ENCODE measurements at regions of chr14 and their contacts with region 1.

Region 1: GRCh38 chr14:76958980-76959710 is 69.4 kb downstream of the IRF2BPL start:
- DNase-seq: peak; percentile 46
- H3K4me3 ChIP-seq: no peak overlapping the region
- H3K27ac ChIP-seq: peak overlapping the region; percentile 34 to 57
- H3K4me1 ChIP-seq: peaks cover 19% of the 10 kb centered on the region
- H3K27me3 ChIP-seq: no peaks in the 10 kb centered on the region
- CTCF ChIP-seq: no peak
- POLR2A ChIP-seq: peak; percentile 16

Region 2: GRCh38 chr14:76664790-76665189 is 294.4 kb before region 1 on chr14:
- intact Hi-C with region 1: no loop called
- DNase-seq: no peak
- H3K4me3 ChIP-seq: no peak overlapping the region
- H3K27ac ChIP-seq: no peak overlapping the region
- H3K4me1 ChIP-seq: no peaks in the 10 kb centered on the region
- H3K27me3 ChIP-seq: no peaks in the 10 kb centered on the region
- CTCF ChIP-seq: no peak
- POLR2A ChIP-seq: no peak

Region 3: GRCh38 chr14:77028384-77029231 is 69.5 kb after region 1 on chr14 and contains the start of gene IRF2BPL:
- intact Hi-C with region 1: loop called (anchors 2 kb)
- DNase-seq: peak; percentile 97
- H3K4me3 ChIP-seq: peak within 1 kb of the TSS; percentile 86 to 93
- H3K27ac ChIP-seq: peak within 1 kb of the TSS; percentile 99 to 100
- H3K4me1 ChIP-seq: peaks cover 42% of the 10 kb centered on the region
- H3K27me3 ChIP-seq: no peaks in the 10 kb centered on the region
- CTCF ChIP-seq: peak in 2 of 4 experiments; percentile 4 to 19
- POLR2A ChIP-seq: peak; percentile 97
- total RNA-seq, gene IRF2BPL: 113 to 141 TPM

Region 4: GRCh38 chr14:77303398-77304203 is 344.5 kb after region 1 on chr14:
- intact Hi-C with region 1: no loop called
- DNase-seq: no peak
- H3K4me3 ChIP-seq: no peak overlapping the region
- H3K27ac ChIP-seq: peak overlapping the region in 1 of 2 donors; percentile 38
- H3K4me1 ChIP-seq: no peaks in the 10 kb centered on the region
- H3K27me3 ChIP-seq: no peaks in the 10 kb centered on the region
- CTCF ChIP-seq: no peak
- POLR2A ChIP-seq: no peak

Region 5: DNA sequence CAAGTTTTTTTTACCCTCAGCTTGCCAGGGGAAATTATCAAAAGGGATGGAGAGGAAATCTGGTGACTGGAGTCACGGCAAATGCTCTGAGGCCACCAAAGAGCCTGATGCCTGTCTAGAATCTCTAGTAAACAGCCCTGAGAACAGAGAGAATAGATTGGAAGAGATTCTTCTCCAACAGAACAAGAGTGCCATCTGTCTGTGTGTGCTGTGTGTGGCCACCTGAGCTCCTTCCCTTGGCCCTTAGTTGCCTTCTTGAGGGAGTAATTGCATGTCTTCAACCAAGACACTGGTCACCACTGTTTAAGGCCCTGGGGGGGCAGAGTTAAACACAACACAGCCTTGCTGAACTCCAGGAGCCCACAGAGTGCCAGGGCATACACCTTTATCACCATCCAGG is 367.0 kb after region 1 on chr14:
- intact Hi-C with region 1: no loop called
- DNase-seq: no peak
- H3K4me3 ChIP-seq: no peak overlapping the region
- H3K27ac ChIP-seq: no peak overlapping the region
- H3K4me1 ChIP-seq: no peaks in the 10 kb centered on the region
- H3K27me3 ChIP-seq: no peaks in the 10 kb centered on the region
- CTCF ChIP-seq: no peak
- POLR2A ChIP-seq: no peak